ENCODE measurements at regions of chr11 and their contacts with region 1.

Region 1: DNA sequence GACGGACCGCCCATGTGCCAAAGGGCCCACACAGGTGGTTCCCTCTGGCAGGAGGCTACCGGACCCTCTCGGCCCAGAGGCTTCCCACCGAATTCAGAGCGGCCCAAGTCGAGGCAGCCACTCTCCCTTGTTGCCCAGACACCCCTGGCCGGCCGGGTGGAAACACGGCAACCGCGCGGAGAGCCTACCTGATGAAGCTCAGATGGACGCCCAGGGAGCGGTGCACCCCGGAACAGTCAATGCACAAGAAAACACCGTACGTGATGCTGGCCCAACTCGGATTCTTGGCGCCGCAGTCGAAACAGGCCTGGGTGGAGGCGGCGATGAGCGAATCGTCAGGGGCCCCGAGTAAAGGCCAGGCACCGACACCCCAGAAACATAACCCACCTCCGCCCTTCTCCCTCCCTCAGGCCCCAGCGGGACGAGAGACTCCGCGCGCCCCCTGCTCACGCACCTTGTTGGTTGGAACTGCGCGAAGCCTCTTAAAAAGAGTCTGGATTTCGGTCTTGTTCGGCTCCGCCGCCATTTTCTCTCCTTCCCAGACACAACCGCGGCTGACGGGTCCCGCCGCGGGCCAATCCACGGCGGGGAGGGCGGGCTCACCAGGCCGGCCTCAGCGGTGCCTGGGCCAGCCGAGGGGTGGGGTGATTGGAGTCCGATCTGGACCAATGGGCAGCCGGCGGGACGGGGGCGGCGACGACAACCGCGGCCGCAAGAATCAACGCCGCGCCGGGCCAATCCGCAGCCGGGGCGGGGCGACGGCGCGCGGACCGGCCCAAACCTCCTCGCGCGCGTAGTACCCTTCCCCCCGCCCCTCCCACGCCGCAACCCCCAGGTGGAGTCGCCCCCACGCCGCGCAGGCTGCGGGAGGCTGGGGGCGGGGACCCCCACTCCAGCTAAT is at the start of gene ARFGAP2:
- DNase-seq: peak; percentile 76
- H3K4me3 ChIP-seq: peak within 1 kb of the TSS; percentile 88
- H3K27me3 ChIP-seq: no peaks in the 10 kb centered on the region
- CTCF ChIP-seq: no peak
- polyA plus RNA-seq, gene ARFGAP2: 44.8 and 58.1 TPM in 2 replicates

Region 2: DNA sequence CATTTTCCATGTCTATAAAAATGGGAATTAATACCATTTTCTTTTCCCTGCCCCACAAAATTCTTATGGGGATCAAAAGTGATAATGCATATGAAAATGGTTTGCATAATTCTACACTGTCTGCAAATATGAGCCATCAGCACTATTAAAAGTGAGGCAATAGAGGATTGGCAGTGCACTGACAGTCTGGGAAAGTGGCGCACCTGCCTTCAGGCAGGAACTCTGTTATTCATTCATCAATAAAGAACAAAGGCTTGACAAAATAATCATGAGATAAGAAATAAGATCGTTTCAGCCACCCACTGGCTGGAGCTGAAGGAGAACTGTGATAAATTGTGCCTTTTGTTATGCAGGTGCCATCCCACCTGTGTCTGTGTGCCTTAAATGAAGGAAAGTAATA is 49.4 kb before region 1 on chr11:
- CTCF ChIA-PET with region 1: no interaction called
- POLR2A ChIA-PET with region 1: no interaction called
- DNase-seq: no peak
- H3K4me3 ChIP-seq: no peak overlapping the region
- H3K27me3 ChIP-seq: no peaks in the 10 kb centered on the region
- CTCF ChIP-seq: no peak

Region 3: GRCh38 chr11:47213985-47214564 is 37.5 kb after region 1 on chr11:
- CTCF ChIA-PET with region 1: interaction called, 15 read pairs
- POLR2A ChIA-PET with region 1: no interaction called
- DNase-seq: no peak
- H3K4me3 ChIP-seq: peak overlapping the region; percentile 69
- H3K27me3 ChIP-seq: no peaks in the 10 kb centered on the region
- CTCF ChIP-seq: no peak

Region 4: GRCh38 chr11:47264521-47264920 is 87.9 kb after region 1 on chr11:
- CTCF ChIA-PET with region 1: interaction called, 55 read pairs
- POLR2A ChIA-PET with region 1: no interaction called
- DNase-seq: no peak
- H3K4me3 ChIP-seq: no peak overlapping the region
- H3K27me3 ChIP-seq: no peaks in the 10 kb centered on the region
- CTCF ChIP-seq: no peak

Region 5: GRCh38 chr11:47355283-47356128 is 178.9 kb after region 1 on chr11:
- CTCF ChIA-PET with region 1: interaction called, 14 read pairs
- POLR2A ChIA-PET with region 1: no interaction called
- DNase-seq: peak; percentile 36
- H3K4me3 ChIP-seq: peak overlapping the region; percentile 29
- H3K27me3 ChIP-seq: no peaks in the 10 kb centered on the region
- CTCF ChIP-seq: peak; percentile 100